ENCODE measurements at regions of chr19 and their contacts with region 1.

Region 1: GRCh38 chr19:40777937-40778705 is at the start of gene RAB4B:
- DNase-seq: peak; percentile 100
- H3K4me3 ChIP-seq: peak within 1 kb of the TSS; percentile 72
- H3K4me3 Mint-ChIP-seq: peak within 1 kb of the TSS; percentile 81
- H3K27ac Mint-ChIP-seq: peak within 1 kb of the TSS; percentile 83
- H3K4me1 ChIP-seq: peaks cover 6% of the 10 kb centered on the region; the same call in 1 of the 2 replicates
- H3K4me1 Mint-ChIP-seq: peaks cover 18% of the 10 kb centered on the region
- H3K27me3 ChIP-seq: no peaks in the 10 kb centered on the region
- H3K27me3 Mint-ChIP-seq: no peaks in the 10 kb centered on the region
- CTCF ChIP-seq: no peak
- total RNA-seq, gene RAB4B: 19.9 and 21.5 TPM in 2 replicates

Region 2: DNA sequence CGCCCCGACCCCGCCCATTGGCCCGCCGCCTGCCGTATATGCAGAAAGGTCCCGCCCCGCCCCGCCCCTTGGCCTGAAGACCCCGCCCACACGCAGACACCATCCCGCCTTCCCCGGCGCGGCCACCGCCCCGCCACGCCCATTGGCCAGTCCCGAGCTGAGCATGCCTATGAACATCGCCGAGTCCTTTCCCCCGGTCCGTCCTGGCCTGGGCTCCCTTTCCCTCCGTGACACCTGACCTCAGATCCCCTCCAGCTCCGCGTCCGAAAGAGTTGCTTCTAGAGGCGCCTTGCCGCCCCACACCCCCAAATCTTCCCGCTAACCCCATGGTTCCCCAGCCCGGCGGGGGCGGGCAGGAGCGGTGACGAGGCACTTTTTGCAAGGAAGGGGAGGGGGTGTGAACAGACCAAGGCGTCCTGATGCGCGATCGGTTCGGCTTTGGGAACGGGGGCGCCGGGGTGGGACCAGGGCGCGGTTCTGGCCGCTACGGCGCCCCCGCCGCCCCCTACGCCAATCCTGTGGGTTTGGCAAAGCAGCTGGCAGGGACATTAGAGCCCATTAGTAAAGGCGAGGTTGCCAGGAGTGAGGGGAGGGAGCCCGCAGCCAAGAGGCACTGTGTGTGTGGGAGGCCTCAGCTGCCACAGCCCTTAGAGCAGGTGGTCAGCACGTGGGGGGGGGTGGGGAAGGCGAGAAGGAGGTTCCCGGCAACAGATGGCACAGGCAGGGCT is 87.3 kb before region 1 on chr19:
- CTCF ChIA-PET with region 1: interaction called, 3 read pairs
- POLR2A ChIA-PET with region 1: interaction called, 16 read pairs
- intact Hi-C with region 1: no loop called
- DNase-seq: peak; percentile 94 to 95
- H3K4me3 ChIP-seq: peak overlapping the region; percentile 58
- H3K4me3 Mint-ChIP-seq: no peak overlapping the region
- H3K27ac Mint-ChIP-seq: peak overlapping the region; percentile 100
- H3K4me1 ChIP-seq: peaks cover 24% of the 10 kb centered on the region
- H3K4me1 Mint-ChIP-seq: peaks cover 5% of the 10 kb centered on the region
- H3K27me3 ChIP-seq: no peaks in the 10 kb centered on the region
- H3K27me3 Mint-ChIP-seq: no peaks in the 10 kb centered on the region
- CTCF ChIP-seq: no peak

Region 3: DNA sequence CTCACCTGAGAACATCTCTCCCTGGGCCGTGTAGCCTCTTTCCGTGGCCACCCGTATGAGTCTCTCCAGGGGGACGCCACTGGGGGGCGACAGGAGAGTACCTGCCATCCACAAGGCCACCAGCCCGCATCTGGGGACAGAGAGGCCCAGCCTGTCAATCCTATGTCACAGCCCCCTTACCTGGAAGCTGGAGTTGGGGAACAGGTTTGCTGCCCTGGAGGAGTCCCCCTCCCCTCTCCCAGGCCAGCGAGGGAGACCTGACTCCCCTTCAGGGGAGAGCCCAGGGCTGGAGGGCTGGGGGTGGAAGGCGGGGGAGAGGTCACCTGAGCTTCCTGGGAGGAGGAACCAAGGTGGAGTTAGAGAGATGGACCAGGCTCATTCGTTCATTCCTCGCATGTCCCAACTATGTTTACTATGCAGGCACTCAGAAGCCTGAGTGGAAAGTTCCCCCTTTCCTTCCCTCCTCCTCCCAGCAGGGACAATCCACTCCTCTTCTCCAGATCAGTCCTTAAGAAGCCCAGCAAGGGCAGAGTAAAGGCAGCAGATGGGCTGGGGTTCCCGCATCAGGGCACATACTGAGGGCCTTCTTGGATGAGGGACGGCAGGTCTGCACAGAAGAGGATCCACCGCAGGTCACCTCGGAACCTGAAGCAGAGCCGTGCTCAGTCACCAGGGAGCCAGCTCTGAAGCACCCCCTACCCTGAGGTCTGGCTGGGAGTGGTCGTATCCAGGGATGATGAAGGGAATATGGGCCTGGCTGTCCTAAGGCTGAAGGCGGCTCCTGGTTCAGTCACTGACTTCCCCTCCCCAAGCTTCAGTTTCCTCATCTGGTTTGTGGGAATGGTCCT is 33.3 kb before region 1 on chr19:
- CTCF ChIA-PET with region 1: interaction called, 8 read pairs
- POLR2A ChIA-PET with region 1: interaction called, 147 read pairs
- intact Hi-C with region 1: no loop called
- DNase-seq: peak; percentile 75
- H3K4me3 ChIP-seq: no peak overlapping the region
- H3K4me3 Mint-ChIP-seq: peak overlapping the region; percentile 30
- H3K27ac Mint-ChIP-seq: peak overlapping the region; percentile 86
- H3K4me1 ChIP-seq: peaks cover 27% of the 10 kb centered on the region
- H3K4me1 Mint-ChIP-seq: peaks cover 16% of the 10 kb centered on the region
- H3K27me3 ChIP-seq: no peaks in the 10 kb centered on the region
- H3K27me3 Mint-ChIP-seq: no peaks in the 10 kb centered on the region
- CTCF ChIP-seq: peak; percentile 37 to 41

Region 4: GRCh38 chr19:40756502-40757110 is 21.5 kb before region 1 on chr19:
- CTCF ChIA-PET with region 1: interaction called, 3 read pairs
- POLR2A ChIA-PET with region 1: interaction called, 147 read pairs
- intact Hi-C with region 1: loop called (anchors 1 kb)
- DNase-seq: no peak
- H3K4me3 ChIP-seq: no peak overlapping the region
- H3K4me3 Mint-ChIP-seq: no peak overlapping the region
- H3K27ac Mint-ChIP-seq: no peak overlapping the region
- H3K4me1 ChIP-seq: peaks cover 11% of the 10 kb centered on the region
- H3K4me1 Mint-ChIP-seq: peaks cover 16% of the 10 kb centered on the region
- H3K27me3 ChIP-seq: no peaks in the 10 kb centered on the region
- H3K27me3 Mint-ChIP-seq: no peaks in the 10 kb centered on the region
- CTCF ChIP-seq: no peak

Region 5: GRCh38 chr19:40806488-40807468 is 28.7 kb after region 1 on chr19:
- CTCF ChIA-PET with region 1: interaction called, 6 read pairs
- POLR2A ChIA-PET with region 1: interaction called, 6 read pairs
- intact Hi-C with region 1: loop called (anchors 2 kb)
- DNase-seq: peak in 1 of 2 experiments; percentile 76
- H3K4me3 ChIP-seq: no peak overlapping the region
- H3K4me3 Mint-ChIP-seq: no peak overlapping the region
- H3K27ac Mint-ChIP-seq: peak overlapping the region; percentile 87
- H3K4me1 ChIP-seq: peaks cover 13% of the 10 kb centered on the region
- H3K4me1 Mint-ChIP-seq: peaks cover 44% of the 10 kb centered on the region
- H3K27me3 ChIP-seq: no peaks in the 10 kb centered on the region
- H3K27me3 Mint-ChIP-seq: no peaks in the 10 kb centered on the region
- CTCF ChIP-seq: peak; percentile 58 to 66

Region 6: GRCh38 chr19:41263850-41264580 is 485.9 kb after region 1 on chr19 and contains the start of gene HNRNPUL1:
- CTCF ChIA-PET with region 1: no interaction called
- POLR2A ChIA-PET with region 1: interaction called, 13 read pairs
- intact Hi-C with region 1: no loop called
- DNase-seq: peak; percentile 99 to 100
- H3K4me3 ChIP-seq: peak within 1 kb of the TSS; percentile 86
- H3K4me3 Mint-ChIP-seq: peak within 1 kb of the TSS; percentile 83
- H3K27ac Mint-ChIP-seq: peak within 1 kb of the TSS; percentile 87
- H3K4me1 ChIP-seq: peaks cover 11% of the 10 kb centered on the region
- H3K4me1 Mint-ChIP-seq: peaks cover 30% of the 10 kb centered on the region
- H3K27me3 ChIP-seq: no peaks in the 10 kb centered on the region
- H3K27me3 Mint-ChIP-seq: no peaks in the 10 kb centered on the region
- CTCF ChIP-seq: peak; percentile 20 to 46
- total RNA-seq, gene HNRNPUL1: 322 and 324 TPM in 2 replicates